ENCODE measurements at regions of chr7 and their contacts with region 1.

Region 1: DNA sequence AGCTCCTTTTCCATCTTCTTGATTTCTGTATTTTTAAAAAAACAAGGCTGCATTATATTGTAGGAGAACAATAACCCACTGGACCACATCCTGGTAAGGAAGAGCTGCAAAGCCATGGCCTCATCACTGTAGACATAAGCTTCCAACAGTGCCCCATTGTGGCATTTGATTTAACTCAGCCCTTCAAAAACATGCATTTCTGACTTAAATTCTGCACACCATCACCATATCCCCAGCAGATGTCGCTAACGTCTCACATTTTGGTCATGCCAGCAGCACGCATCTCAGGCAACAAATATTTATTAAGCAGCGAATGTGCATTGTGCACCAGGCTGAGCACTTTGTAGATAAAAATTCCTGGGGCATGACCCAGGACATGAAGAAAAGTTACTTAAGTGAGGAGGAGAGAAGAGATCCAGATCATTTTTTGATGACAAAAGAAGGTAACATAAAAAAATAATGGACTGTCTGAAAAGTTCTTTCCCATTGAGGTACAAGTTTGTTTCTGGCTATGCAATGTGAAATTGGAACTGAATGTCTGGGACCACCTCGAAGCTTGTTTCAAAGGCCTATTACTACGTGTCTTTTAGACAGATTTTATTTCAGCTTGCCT is 164.6 kb upstream of the CDCA7L start:
- DNase-seq: peak; percentile 26 to 76 (median 64)
- ATAC-seq: peak; percentile 88
- H3K4me3 ChIP-seq: no peak overlapping the region
- H3K4me3 Mint-ChIP-seq: no peak overlapping the region
- H3K27ac ChIP-seq: no peak overlapping the region
- H3K27ac Mint-ChIP-seq: no peak overlapping the region
- H3K4me1 ChIP-seq: no peaks in the 10 kb centered on the region
- H3K4me1 Mint-ChIP-seq: no peaks in the 10 kb centered on the region
- H3K27me3 ChIP-seq: no peaks in the 10 kb centered on the region
- H3K27me3 Mint-ChIP-seq: peaks cover 0 to 5% (median 3%) of the 10 kb centered on the region in 5 donors

Region 2: DNA sequence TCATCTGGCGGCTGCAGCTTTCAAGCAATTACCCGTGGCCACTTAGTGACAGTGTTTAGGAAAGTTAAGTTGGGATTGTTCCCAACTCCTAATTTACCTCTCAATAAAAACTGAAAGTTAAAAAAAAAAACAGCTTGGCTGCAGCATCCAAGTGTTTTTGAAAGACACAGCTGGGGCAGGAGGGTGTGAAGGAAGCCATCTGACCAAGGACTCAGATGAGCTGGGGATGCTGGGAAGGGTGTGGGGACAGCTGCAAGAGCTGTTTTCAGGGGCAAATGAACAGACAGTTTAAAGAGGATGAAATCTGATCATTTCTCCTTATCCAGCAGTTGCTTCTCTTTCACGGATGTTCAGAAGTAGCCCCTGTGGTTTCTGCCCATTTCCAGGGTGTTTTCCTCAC is 35.4 kb before region 1 on chr7:
- CTCF ChIA-PET with region 1: no interaction called
- POLR2A ChIA-PET with region 1: no interaction called
- intact Hi-C with region 1: no loop called
- DNase-seq: no peak
- ATAC-seq: no peak
- H3K4me3 ChIP-seq: no peak overlapping the region
- H3K4me3 Mint-ChIP-seq: no peak overlapping the region
- H3K27ac ChIP-seq: no peak overlapping the region
- H3K27ac Mint-ChIP-seq: no peak overlapping the region
- H3K4me1 ChIP-seq: no peaks in the 10 kb centered on the region
- H3K4me1 Mint-ChIP-seq: no peaks in the 10 kb centered on the region
- H3K27me3 ChIP-seq: peaks cover 4 to 7% of the 10 kb centered on the region in 2 donors
- H3K27me3 Mint-ChIP-seq: peaks cover 31 to 47% (median 43%) of the 10 kb centered on the region in 5 donors

Region 3: GRCh38 chr7:22255834-22256233 is 145.5 kb after region 1 on chr7:
- CTCF ChIA-PET with region 1: no interaction called
- POLR2A ChIA-PET with region 1: no interaction called
- intact Hi-C with region 1: loop called in 1 of 2 experiments (anchors 10 kb)
- DNase-seq: no peak
- ATAC-seq: no peak
- H3K4me3 ChIP-seq: no peak overlapping the region
- H3K4me3 Mint-ChIP-seq: no peak overlapping the region
- H3K27ac ChIP-seq: no peak overlapping the region
- H3K27ac Mint-ChIP-seq: no peak overlapping the region
- H3K4me1 ChIP-seq: no peaks in the 10 kb centered on the region
- H3K4me1 Mint-ChIP-seq: peaks cover 0 to 6% (median 0%) of the 10 kb centered on the region in 7 donors
- H3K27me3 ChIP-seq: no peaks in the 10 kb centered on the region
- H3K27me3 Mint-ChIP-seq: peaks cover 11 to 24% (median 14%) of the 10 kb centered on the region in 5 donors

Region 4: DNA sequence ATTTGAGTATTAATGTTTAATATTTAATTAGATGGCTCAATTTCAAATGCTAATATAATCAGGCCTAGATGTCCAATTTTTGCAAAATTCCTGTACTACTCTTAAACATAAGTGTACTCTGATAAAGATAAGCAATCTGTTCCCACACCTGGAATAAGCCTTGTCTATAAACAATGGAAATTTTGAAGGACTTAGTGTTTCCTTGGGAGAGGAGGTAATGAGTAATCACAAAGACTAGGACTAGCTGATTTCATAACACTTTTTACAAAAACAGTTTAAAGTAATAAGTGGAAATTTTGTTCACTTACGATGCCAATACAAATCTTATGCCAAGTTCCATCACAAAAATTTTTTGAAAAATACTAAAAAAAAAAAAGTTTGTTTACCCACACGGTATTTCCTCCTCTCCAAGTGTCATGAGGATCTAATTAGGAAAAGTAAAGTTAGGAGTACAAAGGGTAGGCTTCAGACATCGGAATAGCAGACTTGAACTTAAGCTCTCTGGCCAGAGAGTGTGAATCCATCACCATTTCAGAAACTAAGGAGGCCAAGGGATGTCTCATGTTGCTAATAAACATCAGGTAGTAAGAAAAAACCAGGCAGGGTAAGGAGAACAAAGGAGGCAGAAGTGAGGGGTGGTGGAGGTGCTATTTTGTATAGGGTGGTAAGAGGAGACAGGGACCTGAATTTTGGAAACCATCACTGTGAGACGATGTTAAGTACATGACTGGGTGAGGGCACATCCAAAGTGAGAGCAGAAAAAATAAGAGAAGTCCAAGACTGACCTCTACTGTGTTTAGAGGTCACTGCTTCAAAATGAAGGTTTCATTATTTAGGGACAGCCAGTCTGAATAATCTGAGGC is 185.3 kb after region 1 on chr7:
- CTCF ChIA-PET with region 1: no interaction called
- POLR2A ChIA-PET with region 1: no interaction called
- intact Hi-C with region 1: loop called in 1 of 2 experiments (anchors 5 kb)
- DNase-seq: no peak
- ATAC-seq: no peak
- H3K4me3 ChIP-seq: no peak overlapping the region
- H3K4me3 Mint-ChIP-seq: no peak overlapping the region
- H3K27ac ChIP-seq: no peak overlapping the region
- H3K27ac Mint-ChIP-seq: no peak overlapping the region
- H3K4me1 ChIP-seq: no peaks in the 10 kb centered on the region
- H3K4me1 Mint-ChIP-seq: peaks cover 0 to 12% (median 0%) of the 10 kb centered on the region in 7 donors
- H3K27me3 ChIP-seq: no peaks in the 10 kb centered on the region
- H3K27me3 Mint-ChIP-seq: peaks cover 0 to 29% (median 20%) of the 10 kb centered on the region in 5 donors

Region 5: DNA sequence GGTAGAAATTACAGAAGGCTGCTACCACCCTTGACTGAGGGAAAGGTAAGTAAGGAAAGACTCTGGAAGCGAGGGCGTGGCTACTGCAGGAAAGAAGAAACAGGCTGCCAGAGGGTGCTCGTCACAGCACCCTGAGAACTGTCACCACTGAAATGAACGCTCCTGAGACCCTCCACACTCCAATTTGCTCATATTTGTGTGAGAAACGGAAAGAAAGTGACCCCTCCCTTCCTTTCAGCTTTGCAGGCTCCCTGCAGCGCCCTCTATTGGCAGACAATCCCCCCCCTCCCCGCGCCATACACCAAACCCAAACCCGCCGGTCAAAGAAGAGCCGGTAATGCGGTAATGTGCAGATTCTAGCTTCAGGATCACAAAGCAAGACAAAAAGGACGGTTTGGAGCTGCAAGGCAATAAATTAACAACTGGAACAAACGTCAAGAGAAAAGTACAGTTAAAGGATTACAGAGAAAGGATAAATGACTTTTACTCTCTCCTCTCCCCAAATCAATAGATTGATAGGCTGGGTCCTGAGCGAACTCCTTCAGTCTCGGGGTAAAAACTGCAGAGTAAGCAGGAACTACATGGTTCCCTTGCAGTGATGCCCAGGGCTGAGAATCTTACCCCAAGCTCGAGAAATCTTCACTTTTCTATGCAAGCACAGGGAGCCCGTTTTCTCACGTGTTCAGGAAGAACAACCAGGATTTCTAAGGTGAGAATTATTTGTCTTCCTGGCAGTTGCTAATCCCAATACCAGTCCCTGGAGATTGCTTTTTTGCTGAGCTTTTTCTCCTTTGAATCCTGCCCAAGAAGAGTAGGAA is 342.0 kb after region 1 on chr7:
- CTCF ChIA-PET with region 1: no interaction called
- POLR2A ChIA-PET with region 1: no interaction called
- intact Hi-C with region 1: loop called in 1 of 2 experiments (anchors 1 kb)
- DNase-seq: peak in 4 of 9 donors; percentile 16 to 43 (median 24)
- ATAC-seq: no peak
- H3K4me3 ChIP-seq: no peak overlapping the region
- H3K4me3 Mint-ChIP-seq: peak overlapping the region in 4 of 10 donors; percentile 3 to 58 (median 28)
- H3K27ac ChIP-seq: no peak overlapping the region
- H3K27ac Mint-ChIP-seq: no peak overlapping the region
- H3K4me1 ChIP-seq: no peaks in the 10 kb centered on the region
- H3K4me1 Mint-ChIP-seq: peaks cover 0 to 13% (median 0%) of the 10 kb centered on the region in 7 donors
- H3K27me3 ChIP-seq: no peaks in the 10 kb centered on the region
- H3K27me3 Mint-ChIP-seq: peaks cover 32 to 60% (median 45%) of the 10 kb centered on the region in 5 donors

Region 6: GRCh38 chr7:22488643-22489462 is 378.5 kb after region 1 on chr7:
- CTCF ChIA-PET with region 1: interaction called, 14 read pairs
- POLR2A ChIA-PET with region 1: no interaction called
- intact Hi-C with region 1: loop called (anchors 1 kb)
- DNase-seq: peak; percentile 26 to 67 (median 38)
- ATAC-seq: peak; percentile 85
- H3K4me3 ChIP-seq: no peak overlapping the region
- H3K4me3 Mint-ChIP-seq: no peak overlapping the region
- H3K27ac ChIP-seq: no peak overlapping the region
- H3K27ac Mint-ChIP-seq: no peak overlapping the region
- H3K4me1 ChIP-seq: no peaks in the 10 kb centered on the region
- H3K4me1 Mint-ChIP-seq: peaks cover 0 to 3% (median 0%) of the 10 kb centered on the region in 7 donors
- H3K27me3 ChIP-seq: no peaks in the 10 kb centered on the region
- H3K27me3 Mint-ChIP-seq: peaks cover 0 to 20% (median 9%) of the 10 kb centered on the region in 5 donors

Region 7: GRCh38 chr7:22499044-22499443 is 388.7 kb after region 1 on chr7:
- CTCF ChIA-PET with region 1: interaction called, 9 read pairs
- POLR2A ChIA-PET with region 1: no interaction called
- intact Hi-C with region 1: loop called (anchors 1 kb)
- DNase-seq: no peak
- ATAC-seq: no peak
- H3K4me3 ChIP-seq: no peak overlapping the region
- H3K4me3 Mint-ChIP-seq: peak overlapping the region in 1 of 10 donors; percentile 69
- H3K27ac ChIP-seq: no peak overlapping the region
- H3K27ac Mint-ChIP-seq: no peak overlapping the region
- H3K4me1 ChIP-seq: no peaks in the 10 kb centered on the region
- H3K4me1 Mint-ChIP-seq: peaks cover 0 to 7% (median 4%) of the 10 kb centered on the region in 7 donors
- H3K27me3 ChIP-seq: no peaks in the 10 kb centered on the region
- H3K27me3 Mint-ChIP-seq: peaks cover 2 to 39% (median 24%) of the 10 kb centered on the region in 5 donors

Measured in naive thymus-derived CD4-positive, alpha-beta T cell (primary cell).